ENCODE measurements at regions of chr22 and their contacts with region 1.

Region 1: GRCh38 chr22:22748297-22748743 is 103.9 kb downstream of the GGTLC2 start:
- DNase-seq: peak in 2 of 5 donors; percentile 27 to 66
- H3K4me3 ChIP-seq: no peak overlapping the region
- H3K4me3 Mint-ChIP-seq: peak overlapping the region in 4 of 7 donors; percentile 33 to 59 (median 54)
- H3K27ac ChIP-seq: no peak overlapping the region
- H3K27ac Mint-ChIP-seq: peak overlapping the region in 7 of 8 donors; percentile 6 to 87 (median 67)
- H3K4me1 ChIP-seq: peaks cover 16% of the 10 kb centered on the region
- H3K4me1 Mint-ChIP-seq: peaks cover 56 to 62% (median 57%) of the 10 kb centered on the region in 3 donors
- H3K27me3 ChIP-seq: no peaks in the 10 kb centered on the region
- H3K27me3 Mint-ChIP-seq: peaks cover 2 to 3% of the 10 kb centered on the region in 2 donors

Region 2: DNA sequence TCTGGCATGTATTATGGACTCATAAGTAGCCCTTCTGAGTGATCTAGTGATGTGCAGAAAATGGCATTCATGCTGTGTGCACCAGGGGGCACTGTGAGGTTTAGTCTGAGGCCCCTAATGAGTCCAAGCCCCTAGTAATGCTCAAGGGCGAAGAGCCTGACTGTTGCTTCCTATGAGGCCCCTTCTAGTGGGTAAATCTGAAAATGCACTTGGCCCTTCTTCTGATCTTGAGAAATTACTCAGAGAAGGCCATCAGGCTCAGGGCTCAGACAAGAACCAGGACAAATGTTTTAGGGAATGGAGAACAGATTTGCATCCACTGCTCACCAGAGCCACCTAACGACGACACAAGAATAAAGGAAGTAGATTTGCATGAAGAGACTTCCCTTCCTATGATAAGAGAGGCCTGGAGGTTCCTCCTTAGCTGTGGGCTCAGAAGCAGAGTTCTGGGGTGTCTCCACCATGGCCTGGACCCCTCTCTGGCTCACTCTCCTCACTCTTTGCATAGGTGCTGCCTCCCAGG is 28.1 kb before region 1 on chr22:
- CTCF ChIA-PET with region 1: interaction called, 41 read pairs
- POLR2A ChIA-PET with region 1: interaction called, 5 read pairs
- DNase-seq: peak; percentile 20 to 78 (median 37)
- H3K4me3 ChIP-seq: no peak overlapping the region
- H3K4me3 Mint-ChIP-seq: peak overlapping the region in 6 of 7 donors; percentile 34 to 66 (median 54)
- H3K27ac ChIP-seq: peak overlapping the region; percentile 4
- H3K27ac Mint-ChIP-seq: peak overlapping the region; percentile 85 to 97 (median 91)
- H3K4me1 ChIP-seq: peaks cover 26% of the 10 kb centered on the region
- H3K4me1 Mint-ChIP-seq: peaks cover 50 to 56% (median 56%) of the 10 kb centered on the region in 3 donors
- H3K27me3 ChIP-seq: no peaks in the 10 kb centered on the region
- H3K27me3 Mint-ChIP-seq: no peaks in the 10 kb centered on the region

Region 3: DNA sequence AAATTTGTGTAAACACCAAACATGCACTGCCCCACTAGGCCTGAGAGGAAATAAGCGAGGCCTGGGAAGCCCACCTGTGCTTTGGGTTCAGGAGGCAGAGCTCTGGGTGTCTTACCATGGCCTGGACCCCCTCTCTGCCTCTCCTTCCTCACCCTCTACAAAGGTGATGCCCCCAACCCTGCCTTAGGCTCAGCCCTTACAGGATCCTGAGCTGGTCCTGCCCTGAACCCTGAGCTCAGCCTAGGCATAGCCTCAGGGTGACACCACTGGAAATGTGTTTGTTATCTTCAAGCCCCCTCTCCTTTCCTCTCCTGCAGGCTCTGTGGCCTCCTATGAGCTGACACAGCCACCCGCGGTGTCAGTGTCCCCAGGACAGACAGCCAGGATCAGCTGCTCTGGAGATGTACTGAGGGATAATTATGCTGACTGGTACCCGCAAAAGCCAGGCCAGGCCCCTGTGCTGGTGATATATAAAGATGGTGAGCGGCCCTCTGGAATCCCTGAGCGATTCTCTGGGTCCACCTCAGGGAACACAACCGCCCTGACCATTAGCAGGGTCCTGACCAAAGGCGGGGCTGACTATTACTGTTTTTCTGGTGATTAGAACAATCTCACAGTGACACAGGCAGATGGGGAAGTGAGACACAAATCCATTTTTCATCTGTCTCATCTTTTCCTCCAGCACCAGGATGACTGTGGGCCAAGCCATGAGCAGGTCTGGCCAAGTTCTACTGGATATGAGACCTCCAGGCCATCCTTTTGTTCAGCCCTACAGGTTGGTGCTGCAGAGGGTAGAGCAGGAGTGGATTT is 13.8 kb after region 1 on chr22:
- CTCF ChIA-PET with region 1: interaction called, 107 read pairs
- POLR2A ChIA-PET with region 1: interaction called, 4 read pairs
- DNase-seq: no peak
- H3K4me3 ChIP-seq: no peak overlapping the region
- H3K4me3 Mint-ChIP-seq: peak overlapping the region in 6 of 7 donors; percentile 39 to 76 (median 68)
- H3K27ac ChIP-seq: peak overlapping the region; percentile 14
- H3K27ac Mint-ChIP-seq: peak overlapping the region; percentile 50 to 91 (median 78)
- H3K4me1 ChIP-seq: peaks cover 11% of the 10 kb centered on the region
- H3K4me1 Mint-ChIP-seq: peaks cover 68 to 93% (median 81%) of the 10 kb centered on the region in 3 donors
- H3K27me3 ChIP-seq: no peaks in the 10 kb centered on the region
- H3K27me3 Mint-ChIP-seq: peaks cover 0 to 2% of the 10 kb centered on the region in 2 donors

Region 4: DNA sequence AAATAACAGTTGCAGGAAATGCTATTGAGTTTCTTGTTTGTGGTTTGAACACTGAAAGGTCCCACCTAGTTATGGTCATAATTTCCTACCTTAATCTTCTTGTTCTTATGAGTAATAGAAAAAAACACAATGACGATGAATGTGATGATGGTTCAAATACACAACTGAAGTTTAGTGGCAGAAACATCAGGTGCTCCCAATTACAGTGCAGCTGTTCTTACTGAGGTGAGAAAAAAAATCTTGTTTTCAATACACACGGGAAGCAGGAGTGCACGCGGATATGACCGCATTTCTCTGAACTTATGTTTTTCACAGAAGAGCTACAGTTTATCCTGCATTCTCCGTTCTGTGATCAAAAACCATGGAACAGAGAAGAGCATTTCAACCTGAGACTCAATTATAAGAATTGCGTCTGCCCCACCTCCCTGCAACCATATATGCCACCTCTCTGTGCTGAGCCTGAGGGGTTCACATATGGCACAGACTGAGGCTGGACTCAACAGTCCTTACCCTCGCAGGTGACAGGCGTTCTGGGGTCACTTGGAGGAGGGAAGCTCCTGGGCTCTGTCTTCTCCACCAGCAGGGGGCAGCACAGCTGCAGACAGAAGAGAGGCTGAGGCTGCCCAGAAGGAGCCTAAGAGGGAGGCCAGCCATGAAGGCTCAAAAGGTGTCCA is 39.6 kb after region 1 on chr22:
- CTCF ChIA-PET with region 1: interaction called, 86 read pairs
- POLR2A ChIA-PET with region 1: interaction called, 7 read pairs
- DNase-seq: peak; percentile 46 to 84 (median 57)
- H3K4me3 ChIP-seq: no peak overlapping the region
- H3K4me3 Mint-ChIP-seq: peak overlapping the region; percentile 22 to 83 (median 52)
- H3K27ac ChIP-seq: peak overlapping the region; percentile 38
- H3K27ac Mint-ChIP-seq: peak overlapping the region; percentile 78 to 99 (median 90)
- H3K4me1 ChIP-seq: peaks cover 57% of the 10 kb centered on the region
- H3K4me1 Mint-ChIP-seq: peaks cover 79 to 92% (median 80%) of the 10 kb centered on the region in 3 donors
- H3K27me3 ChIP-seq: no peaks in the 10 kb centered on the region
- H3K27me3 Mint-ChIP-seq: no peaks in the 10 kb centered on the region

Region 5: GRCh38 chr22:22818861-22819855 is 70.8 kb after region 1 on chr22:
- CTCF ChIA-PET with region 1: interaction called, 194 read pairs
- POLR2A ChIA-PET with region 1: interaction called, 10 read pairs
- DNase-seq: peak in 3 of 5 donors; percentile 38 to 74 (median 62)
- H3K4me3 ChIP-seq: peak overlapping the region; percentile 28
- H3K4me3 Mint-ChIP-seq: peak overlapping the region; percentile 75 to 92 (median 86)
- H3K27ac ChIP-seq: peak overlapping the region; percentile 3
- H3K27ac Mint-ChIP-seq: peak overlapping the region; percentile 75 to 97 (median 88)
- H3K4me1 ChIP-seq: peaks cover 90% of the 10 kb centered on the region
- H3K4me1 Mint-ChIP-seq: peaks cover 97 to 99% (median 99%) of the 10 kb centered on the region in 3 donors
- H3K27me3 ChIP-seq: no peaks in the 10 kb centered on the region
- H3K27me3 Mint-ChIP-seq: no peaks in the 10 kb centered on the region

Region 6: GRCh38 chr22:22870577-22871404 is 122.5 kb after region 1 on chr22:
- CTCF ChIA-PET with region 1: interaction called, 27 read pairs
- POLR2A ChIA-PET with region 1: no interaction called
- DNase-seq: no peak
- H3K4me3 ChIP-seq: no peak overlapping the region
- H3K4me3 Mint-ChIP-seq: no peak overlapping the region
- H3K27ac ChIP-seq: no peak overlapping the region
- H3K27ac Mint-ChIP-seq: peak overlapping the region in 3 of 8 donors; percentile 37 to 83 (median 38)
- H3K4me1 ChIP-seq: peaks cover 9% of the 10 kb centered on the region
- H3K4me1 Mint-ChIP-seq: peaks cover 28 to 39% (median 29%) of the 10 kb centered on the region in 3 donors
- H3K27me3 ChIP-seq: no peaks in the 10 kb centered on the region
- H3K27me3 Mint-ChIP-seq: peaks cover 0 to 4% of the 10 kb centered on the region in 2 donors

Region 7: DNA sequence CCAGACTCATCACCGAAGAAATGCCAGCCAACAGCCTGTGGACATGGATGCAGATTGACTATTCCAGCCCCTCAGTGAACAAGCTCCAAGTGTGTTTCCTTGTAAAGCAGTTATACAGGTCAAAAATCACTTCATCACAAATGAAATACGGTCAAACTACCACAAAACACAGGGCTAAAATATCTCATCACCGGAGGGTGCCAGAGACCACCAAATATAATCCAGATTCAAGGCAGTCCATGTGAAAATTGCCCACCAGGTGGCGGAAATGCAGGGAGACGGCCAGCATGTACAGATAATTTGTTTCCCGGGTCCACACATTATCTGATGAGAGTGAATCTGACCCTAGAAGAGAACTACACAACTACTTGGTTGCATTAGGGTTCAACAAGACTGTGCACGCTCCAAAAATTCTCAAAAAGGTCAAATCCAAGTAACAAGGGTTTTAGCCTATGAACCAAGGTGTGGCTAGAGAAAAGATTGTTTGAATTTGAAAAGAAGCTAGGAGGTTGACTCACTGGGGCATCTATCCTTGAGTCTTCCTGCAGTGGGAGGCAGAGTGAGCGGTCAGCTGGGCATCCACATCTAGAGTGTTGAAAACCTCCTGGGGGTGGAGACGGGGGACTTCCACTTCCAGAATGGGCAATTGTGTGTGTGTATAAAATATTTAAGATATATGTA is 211.0 kb after region 1 on chr22:
- CTCF ChIA-PET with region 1: interaction called, 25 read pairs
- POLR2A ChIA-PET with region 1: no interaction called
- DNase-seq: peak; percentile 59 to 80 (median 70)
- H3K4me3 ChIP-seq: no peak overlapping the region
- H3K4me3 Mint-ChIP-seq: no peak overlapping the region
- H3K27ac ChIP-seq: no peak overlapping the region
- H3K27ac Mint-ChIP-seq: no peak overlapping the region
- H3K4me1 ChIP-seq: no peaks in the 10 kb centered on the region
- H3K4me1 Mint-ChIP-seq: peaks cover 0 to 6% (median 3%) of the 10 kb centered on the region in 3 donors
- H3K27me3 ChIP-seq: peaks cover 4% of the 10 kb centered on the region
- H3K27me3 Mint-ChIP-seq: peaks cover 15 to 27% of the 10 kb centered on the region in 2 donors